WTC11 (cell line): ENCODE measurements at regions of chr6 and their contacts with region 1.

Region 1: GRCh38 chr6:116111552-116112528 is 11.2 kb downstream of the NT5DC1 start:
- DNase-seq: peak; percentile 66
- ATAC-seq: peak; percentile 90
- H3K4me3 Mint-ChIP-seq: no peak overlapping the region
- H3K27ac Mint-ChIP-seq: no peak overlapping the region
- H3K4me1 Mint-ChIP-seq: peaks cover 23% of the 10 kb centered on the region
- H3K27me3 Mint-ChIP-seq: no peaks in the 10 kb centered on the region
- CTCF ChIP-seq: peak; percentile 41

Region 2: GRCh38 chr6:115870464-115870863 is 241.4 kb before region 1 on chr6:
- CTCF ChIA-PET with region 1: no interaction called
- POLR2A ChIA-PET with region 1: no interaction called
- DNase-seq: no peak
- ATAC-seq: no peak
- H3K4me3 Mint-ChIP-seq: no peak overlapping the region
- H3K27ac Mint-ChIP-seq: no peak overlapping the region
- H3K4me1 Mint-ChIP-seq: no peaks in the 10 kb centered on the region
- H3K27me3 Mint-ChIP-seq: no peaks in the 10 kb centered on the region
- CTCF ChIP-seq: no peak

Region 3: DNA sequence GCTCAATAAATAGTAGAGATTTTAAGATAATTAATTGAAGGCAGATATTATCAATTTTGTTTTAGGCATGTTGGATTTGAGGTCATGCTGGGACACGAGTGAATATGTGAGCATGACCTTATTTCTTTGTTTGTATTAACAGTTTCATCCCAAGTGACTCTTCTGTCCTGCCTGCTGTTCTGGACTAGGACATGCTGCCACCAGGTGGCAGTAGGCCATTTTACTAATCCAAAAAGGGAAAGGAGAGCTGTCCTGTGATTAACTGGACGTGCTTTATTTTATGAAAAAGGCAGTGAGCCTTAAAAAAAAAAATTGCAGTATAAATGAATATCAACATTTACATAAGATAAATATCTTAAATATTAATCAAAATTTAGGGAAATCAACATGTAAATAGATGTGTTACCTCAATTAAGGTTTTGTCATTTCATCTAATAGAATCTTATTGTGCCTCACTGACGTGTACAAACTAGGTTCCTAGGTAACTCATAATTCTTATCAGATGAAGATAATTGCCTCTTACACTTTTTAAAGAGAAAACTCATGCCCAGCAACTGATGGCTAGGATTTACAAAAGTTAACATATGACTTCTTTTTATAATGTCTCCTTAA is 100.9 kb before region 1 on chr6:
- CTCF ChIA-PET with region 1: interaction called, 18 read pairs
- POLR2A ChIA-PET with region 1: no interaction called
- DNase-seq: peak; percentile 70
- ATAC-seq: peak; percentile 78
- H3K4me3 Mint-ChIP-seq: no peak overlapping the region
- H3K27ac Mint-ChIP-seq: no peak overlapping the region
- H3K4me1 Mint-ChIP-seq: no peaks in the 10 kb centered on the region
- H3K27me3 Mint-ChIP-seq: no peaks in the 10 kb centered on the region
- CTCF ChIP-seq: peak; percentile 61

Region 4: GRCh38 chr6:116100419-116101301 is 11.2 kb before region 1 on chr6 and contains the start of gene NT5DC1:
- CTCF ChIA-PET with region 1: interaction called, 16 read pairs
- POLR2A ChIA-PET with region 1: interaction called, 3 read pairs
- DNase-seq: peak; percentile 87
- ATAC-seq: peak; percentile 92
- H3K4me3 Mint-ChIP-seq: peak within 1 kb of the TSS; percentile 91
- H3K27ac Mint-ChIP-seq: peak within 1 kb of the TSS; percentile 95
- H3K4me1 Mint-ChIP-seq: peaks cover 57% of the 10 kb centered on the region
- H3K27me3 Mint-ChIP-seq: peaks cover 9% of the 10 kb centered on the region
- CTCF ChIP-seq: no peak
- total RNA-seq, gene NT5DC1: 67.1 to 70.1 TPM (median 67.9 TPM) in 3 replicates

Region 5: DNA sequence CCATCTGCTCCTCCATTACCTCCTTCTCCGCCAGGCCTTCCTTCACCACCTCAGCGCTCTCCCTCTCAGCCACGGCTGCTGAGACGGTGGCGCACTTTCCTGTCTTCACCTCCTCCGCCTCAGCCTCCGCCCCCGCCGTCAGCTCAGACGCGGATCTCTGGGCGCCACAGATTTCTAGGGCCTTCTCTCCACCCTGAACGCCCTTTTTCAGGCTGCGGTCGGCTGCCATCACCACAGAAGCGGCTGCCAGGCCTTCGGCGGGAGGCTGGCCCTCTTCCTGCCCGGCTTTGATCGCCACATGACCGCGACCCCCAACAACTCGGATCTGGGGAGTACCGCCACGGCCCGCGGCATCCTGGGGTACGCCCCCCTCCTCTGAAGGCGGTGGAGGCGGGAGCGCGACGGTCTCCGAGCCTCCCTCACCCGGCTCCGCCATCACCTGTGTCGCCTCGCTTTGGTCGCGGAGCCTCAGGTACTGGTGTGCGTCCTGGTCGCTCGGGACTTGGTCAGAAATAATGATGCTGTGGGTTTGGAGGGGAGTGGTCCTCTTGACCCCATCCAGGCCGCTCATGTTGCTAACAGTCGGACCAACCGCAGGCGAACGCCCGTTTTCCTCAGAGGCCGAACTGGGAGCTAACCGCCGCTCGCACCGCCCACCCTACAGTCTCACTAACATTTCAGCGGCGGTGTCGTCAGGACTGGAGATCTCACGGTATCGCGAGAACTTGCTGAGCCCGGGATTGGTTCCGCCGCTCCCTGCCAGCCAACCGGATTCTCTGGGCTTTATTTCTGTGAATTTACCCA is 167.6 kb after region 1 on chr6 and contains the start of gene TSPYL1:
- CTCF ChIA-PET with region 1: no interaction called
- POLR2A ChIA-PET with region 1: no interaction called
- DNase-seq: peak; percentile 95
- ATAC-seq: peak; percentile 97
- H3K4me3 Mint-ChIP-seq: peak within 1 kb of the TSS; percentile 96
- H3K27ac Mint-ChIP-seq: peak within 1 kb of the TSS; percentile 100
- H3K4me1 Mint-ChIP-seq: peaks cover 55% of the 10 kb centered on the region
- H3K27me3 Mint-ChIP-seq: no peaks in the 10 kb centered on the region
- CTCF ChIP-seq: no peak
- total RNA-seq, gene TSPYL1: 62.4 to 68.6 TPM (median 64.3 TPM) in 3 replicates